ENCODE measurements at regions of chr6 and their contacts with region 1.

Region 1: DNA sequence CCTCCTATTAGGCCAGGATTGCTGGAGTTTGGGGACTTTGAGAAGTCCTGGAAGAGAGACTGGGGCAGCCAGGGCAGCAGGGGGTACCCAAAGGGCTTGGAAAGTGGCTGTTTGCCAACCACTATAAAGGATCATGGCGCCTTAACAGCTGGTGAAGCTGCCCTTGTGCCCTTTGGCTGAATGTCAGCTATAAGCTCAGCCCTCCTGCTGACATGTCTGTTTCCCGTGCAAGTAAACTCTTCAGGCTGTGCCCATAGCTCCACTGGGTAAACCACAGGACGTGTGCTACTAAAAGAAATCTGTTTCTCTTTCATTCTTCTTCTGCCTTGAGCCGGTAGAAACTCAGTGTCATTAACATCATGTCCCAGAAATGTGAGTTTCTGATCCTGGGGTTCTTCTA is 97.3 kb downstream of the CAP2 start:
- DNase-seq: no peak
- H3K4me3 ChIP-seq: no peak overlapping the region
- H3K27ac ChIP-seq: no peak overlapping the region
- H3K4me1 ChIP-seq: peaks cover 0 to 2% of the 10 kb centered on the region in 2 experiments; a peak in 2 of 4 replicates
- H3K27me3 ChIP-seq: no peaks in the 10 kb centered on the region
- CTCF ChIP-seq: no peak
- EP300 ChIP-seq: no peak
- RAD21 ChIP-seq: no peak

Region 2: DNA sequence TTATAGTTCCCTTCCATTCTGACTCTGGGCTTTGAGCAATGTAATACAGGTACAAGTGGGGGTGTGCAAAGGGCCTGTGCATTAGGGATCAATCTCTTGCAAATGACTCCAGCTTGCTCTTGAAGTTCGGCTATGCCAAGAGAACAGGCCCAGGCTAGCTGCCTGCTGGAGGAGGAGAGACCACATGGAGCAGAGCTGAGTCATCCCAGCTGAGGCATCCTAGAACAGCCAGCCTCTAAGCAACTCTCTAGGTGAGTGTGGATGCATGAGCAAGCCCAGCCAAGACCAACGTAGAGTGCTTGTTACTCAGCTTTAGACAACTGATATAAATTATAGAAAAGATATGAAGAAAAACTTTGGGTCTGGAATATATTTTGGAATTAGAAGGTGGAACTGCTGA is 257.2 kb before region 1 on chr6:
- CTCF ChIA-PET with region 1: no interaction called
- POLR2A ChIA-PET with region 1: no interaction called
- DNase-seq: no peak
- H3K4me3 ChIP-seq: no peak overlapping the region
- H3K27ac ChIP-seq: no peak overlapping the region
- H3K4me1 ChIP-seq: no peaks in the 10 kb centered on the region
- H3K27me3 ChIP-seq: no peaks in the 10 kb centered on the region; the same call in 1 of the 2 replicates
- CTCF ChIP-seq: no peak
- EP300 ChIP-seq: no peak
- RAD21 ChIP-seq: no peak

Region 3: GRCh38 chr6:17454316-17455005 is 36.3 kb before region 1 on chr6:
- CTCF ChIA-PET with region 1: no interaction called
- POLR2A ChIA-PET with region 1: no interaction called
- DNase-seq: no peak
- H3K4me3 ChIP-seq: no peak overlapping the region
- H3K27ac ChIP-seq: no peak overlapping the region
- H3K4me1 ChIP-seq: no peaks in the 10 kb centered on the region
- H3K27me3 ChIP-seq: no peaks in the 10 kb centered on the region
- CTCF ChIP-seq: no peak
- EP300 ChIP-seq: no peak
- RAD21 ChIP-seq: no peak

Region 4: GRCh38 chr6:17505062-17505476 is 14.3 kb after region 1 on chr6:
- CTCF ChIA-PET with region 1: interaction called, 10 read pairs
- POLR2A ChIA-PET with region 1: no interaction called
- DNase-seq: peak; percentile 32
- H3K4me3 ChIP-seq: no peak overlapping the region
- H3K27ac ChIP-seq: peak overlapping the region in 1 of 2 experiments; percentile 43; a peak in 2 of 4 replicates
- H3K4me1 ChIP-seq: no peaks in the 10 kb centered on the region
- H3K27me3 ChIP-seq: no peaks in the 10 kb centered on the region
- CTCF ChIP-seq: peak; percentile 49
- EP300 ChIP-seq: no peak
- RAD21 ChIP-seq: 0 out of 2 replicates have a peak, but pooled peaks have one; percentile 21

Region 5: GRCh38 chr6:19333936-19334335 is 1843.2 kb after region 1 on chr6:
- CTCF ChIA-PET with region 1: no interaction called
- POLR2A ChIA-PET with region 1: no interaction called
- DNase-seq: no peak
- H3K4me3 ChIP-seq: no peak overlapping the region
- H3K27ac ChIP-seq: no peak overlapping the region; a peak in 1 of 4 replicates
- H3K4me1 ChIP-seq: no peaks in the 10 kb centered on the region
- H3K27me3 ChIP-seq: no peaks in the 10 kb centered on the region
- CTCF ChIP-seq: no peak
- EP300 ChIP-seq: no peak
- RAD21 ChIP-seq: no peak

Measured in SK-N-SH (cell line).